Gastrocnemius medialis (tissue), 4 donors: ENCODE measurements at regions of chr6 and their contacts with region 1.

Region 1: DNA sequence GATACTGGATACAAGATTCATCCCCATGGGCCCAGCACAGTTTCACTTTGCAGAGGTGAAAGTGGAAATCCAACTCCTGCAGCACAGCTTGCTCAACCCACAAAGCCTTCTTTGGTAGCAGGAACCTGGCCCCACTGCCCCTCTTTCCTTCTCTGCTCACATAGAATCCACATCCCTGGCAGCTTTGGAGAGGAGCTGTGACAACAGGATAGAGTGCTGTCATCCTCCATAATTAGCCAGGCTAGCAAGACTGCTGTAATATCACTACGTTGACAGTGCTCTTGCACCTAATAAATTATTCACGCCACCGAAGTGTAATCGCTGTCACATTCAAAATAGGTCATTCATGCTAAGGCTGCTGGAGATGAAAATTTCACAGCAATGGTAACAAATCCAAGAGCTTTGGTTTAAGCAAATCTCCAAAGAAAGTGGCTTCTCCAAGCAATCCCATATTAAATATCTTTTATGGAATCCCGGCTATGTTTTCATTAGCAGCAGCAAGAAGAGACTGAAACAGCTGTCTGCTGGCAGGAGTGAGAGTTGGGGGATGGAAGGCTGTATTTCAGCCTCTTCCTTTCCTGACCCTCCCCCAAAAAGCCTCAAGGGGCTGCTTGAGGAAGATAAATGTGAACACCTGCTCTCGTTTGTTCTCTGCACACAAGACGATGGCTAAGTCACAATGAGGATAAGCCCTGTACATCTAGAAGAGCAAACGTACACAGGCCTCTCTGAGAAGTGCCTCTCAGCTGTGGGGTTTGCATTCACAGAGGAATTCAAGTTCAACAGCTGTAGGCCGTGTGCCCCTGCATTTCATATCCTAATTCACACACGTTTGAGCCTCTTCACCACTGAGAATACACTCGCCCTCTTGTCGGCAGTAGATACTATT is 16.5 kb downstream of the RIPOR2 start:
- DNase-seq: peak; percentile 68 to 90
- ATAC-seq: peak; percentile 98 to 99
- H3K4me3 ChIP-seq: peak overlapping the region in 3 of 4 donors; percentile 2 to 19 (median 19)
- H3K27ac ChIP-seq: peak overlapping the region; percentile 76 to 86 (median 82)
- H3K4me1 ChIP-seq: peaks cover 32 to 34% of the 10 kb centered on the region in 2 donors
- H3K27me3 ChIP-seq: no peaks in the 10 kb centered on the region
- CTCF ChIP-seq: no peak
- POLR2A ChIP-seq: no peak

Region 2: GRCh38 chr6:24774696-24775519 is 144.3 kb before region 1 on chr6 and contains the start of gene GMNN:
- in situ Hi-C with region 1: no loop called
- intact Hi-C with region 1: loop called (anchors 5 kb)
- DNase-seq: peak; percentile 94 to 95
- ATAC-seq: peak; percentile 96 to 98
- H3K4me3 ChIP-seq: peak within 1 kb of the TSS; percentile 90 to 100 (median 95)
- H3K27ac ChIP-seq: peak within 1 kb of the TSS; percentile 95 to 100 (median 98)
- H3K4me1 ChIP-seq: peaks cover 11 to 15% of the 10 kb centered on the region in 2 donors
- H3K27me3 ChIP-seq: no peaks in the 10 kb centered on the region
- CTCF ChIP-seq: no peak
- POLR2A ChIP-seq: peak; percentile 59 to 62
- total RNA-seq, gene GMNN: 2.6 to 4.4 (median 3.3) TPM

Region 3: DNA sequence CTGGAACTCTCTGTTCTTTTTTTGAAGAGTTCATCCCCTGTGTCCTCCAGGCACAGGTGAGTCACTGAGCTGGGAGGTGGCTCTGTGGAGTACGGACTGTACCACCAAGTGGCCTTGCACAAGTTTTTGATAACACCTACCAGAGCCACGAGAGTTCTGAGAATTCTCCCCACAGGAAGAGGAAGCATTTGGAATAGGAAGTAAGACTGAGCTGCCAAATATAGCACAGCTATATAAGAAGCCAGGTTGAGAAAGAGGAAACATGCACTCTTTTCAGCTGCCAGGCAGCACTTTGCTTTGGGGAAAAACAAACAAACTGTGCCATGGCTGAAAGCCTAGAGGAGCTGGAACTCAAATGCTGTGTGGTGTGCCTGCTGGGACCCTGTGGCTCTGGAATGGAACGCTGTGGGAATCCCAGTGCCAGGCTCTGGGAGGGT is 87.3 kb after region 1 on chr6:
- in situ Hi-C with region 1: no loop called
- intact Hi-C with region 1: loop called (anchors 5 kb)
- DNase-seq: peak; percentile 46 to 79
- ATAC-seq: peak; percentile 74 to 89
- H3K4me3 ChIP-seq: no peak overlapping the region
- H3K27ac ChIP-seq: peak overlapping the region; percentile 66 to 76 (median 72)
- H3K4me1 ChIP-seq: peaks cover 15 to 16% of the 10 kb centered on the region in 2 donors
- H3K27me3 ChIP-seq: no peaks in the 10 kb centered on the region
- CTCF ChIP-seq: no peak
- POLR2A ChIP-seq: peak; percentile 49 to 58

Region 4: GRCh38 chr6:25387483-25387882 is 468.2 kb after region 1 on chr6:
- in situ Hi-C with region 1: no loop called
- intact Hi-C with region 1: no loop called
- DNase-seq: no peak
- ATAC-seq: no peak
- H3K4me3 ChIP-seq: no peak overlapping the region
- H3K27ac ChIP-seq: no peak overlapping the region
- H3K4me1 ChIP-seq: no peaks in the 10 kb centered on the region
- H3K27me3 ChIP-seq: no peaks in the 10 kb centered on the region
- CTCF ChIP-seq: no peak
- POLR2A ChIP-seq: no peak